ENCODE measurements at regions of chr5 and their contacts with region 1.

Region 1: GRCh38 chr5:75265731-75266130 is 29.1 kb upstream of the ANKRD31 start:
- DNase-seq: peak in 2 of 9 experiments; percentile 57 to 67
- ATAC-seq: peak; percentile 78
- H3K4me3 ChIP-seq: no peak overlapping the region
- H3K4me3 Mint-ChIP-seq: no peak overlapping the region
- H3K27ac ChIP-seq: no peak overlapping the region
- H3K27ac Mint-ChIP-seq: no peak overlapping the region
- H3K4me1 ChIP-seq: no peaks in the 10 kb centered on the region
- H3K4me1 Mint-ChIP-seq: peaks cover 3% of the 10 kb centered on the region
- H3K27me3 ChIP-seq: no peaks in the 10 kb centered on the region
- H3K27me3 Mint-ChIP-seq: peaks cover 5% of the 10 kb centered on the region
- CTCF ChIP-seq: peak; percentile 68

Region 2: DNA sequence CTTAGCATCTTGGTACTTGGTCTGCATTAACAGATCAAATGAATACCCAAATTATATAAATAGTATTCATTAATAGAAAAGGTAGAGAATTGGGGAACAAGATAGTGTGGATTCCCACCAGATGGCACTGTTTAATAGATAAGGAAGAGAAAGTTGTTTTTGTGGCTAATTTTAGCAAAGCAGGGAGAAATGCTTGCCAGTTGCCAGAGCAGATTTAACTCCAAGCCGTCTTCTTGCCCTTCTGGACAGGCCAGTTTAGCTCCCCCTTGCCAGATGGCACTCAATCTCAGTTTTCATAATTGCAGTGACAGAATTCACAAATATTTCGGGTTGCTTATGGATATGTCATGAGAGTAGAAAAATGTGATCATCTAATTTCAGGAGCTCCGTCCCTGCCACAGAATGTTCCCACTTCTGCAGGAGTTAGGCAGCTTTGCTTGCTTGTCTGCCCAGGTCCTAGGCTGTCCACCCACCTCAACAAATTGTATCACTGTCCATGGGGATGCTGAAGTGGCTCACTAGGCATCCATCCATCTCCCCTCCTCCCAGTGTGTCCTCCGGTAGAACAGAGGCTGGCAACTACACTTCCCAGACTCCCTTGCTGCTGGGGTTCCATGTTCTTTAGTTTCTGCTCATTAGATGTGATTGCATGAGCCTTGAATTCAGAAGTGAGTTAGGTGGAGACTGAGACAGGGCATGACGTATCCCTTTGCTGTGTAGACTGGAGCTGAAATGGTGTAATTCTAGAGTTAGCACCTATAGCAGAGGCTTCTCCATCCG is 592.5 kb before region 1 on chr5:
- CTCF ChIA-PET with region 1: no interaction called
- POLR2A ChIA-PET with region 1: no interaction called
- intact Hi-C with region 1: loop called in 1 of 2 experiments (anchors 2 kb)
- DNase-seq: peak in 2 of 9 experiments; percentile 32 to 44
- ATAC-seq: no peak
- H3K4me3 ChIP-seq: no peak overlapping the region
- H3K4me3 Mint-ChIP-seq: no peak overlapping the region
- H3K27ac ChIP-seq: no peak overlapping the region
- H3K27ac Mint-ChIP-seq: no peak overlapping the region
- H3K4me1 ChIP-seq: no peaks in the 10 kb centered on the region
- H3K4me1 Mint-ChIP-seq: peaks cover 2% of the 10 kb centered on the region
- H3K27me3 ChIP-seq: peaks cover 0 to 3% of the 10 kb centered on the region in 2 experiments
- H3K27me3 Mint-ChIP-seq: peaks cover 10% of the 10 kb centered on the region
- CTCF ChIP-seq: no peak

Region 3: DNA sequence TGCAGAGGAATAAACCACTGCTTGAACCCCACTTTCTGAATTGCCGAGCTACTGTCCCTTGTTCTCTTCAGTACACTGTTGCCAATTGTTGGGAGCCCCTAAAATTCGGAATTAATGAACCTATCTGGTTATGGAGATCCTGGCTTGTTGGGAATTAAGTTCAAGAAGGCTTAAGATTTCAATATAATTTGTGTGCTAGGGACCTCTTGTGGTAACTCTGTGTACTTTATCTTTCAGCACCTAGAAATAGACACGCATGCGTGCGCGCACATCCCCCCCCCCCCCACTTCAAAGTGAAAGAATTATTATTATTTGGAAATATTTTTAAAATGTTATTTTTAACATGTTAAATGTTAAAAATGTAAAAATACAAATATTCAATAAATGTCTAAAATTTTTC is 346.2 kb before region 1 on chr5:
- CTCF ChIA-PET with region 1: interaction called, 11 read pairs
- POLR2A ChIA-PET with region 1: no interaction called
- intact Hi-C with region 1: loop called in 1 of 2 experiments (anchors 2 kb)
- DNase-seq: peak in 3 of 9 experiments; percentile 18 to 73 (median 62)
- ATAC-seq: peak; percentile 78
- H3K4me3 ChIP-seq: no peak overlapping the region
- H3K4me3 Mint-ChIP-seq: no peak overlapping the region
- H3K27ac ChIP-seq: no peak overlapping the region
- H3K27ac Mint-ChIP-seq: no peak overlapping the region
- H3K4me1 ChIP-seq: no peaks in the 10 kb centered on the region
- H3K4me1 Mint-ChIP-seq: no peaks in the 10 kb centered on the region
- H3K27me3 ChIP-seq: no peaks in the 10 kb centered on the region
- H3K27me3 Mint-ChIP-seq: peaks cover 2% of the 10 kb centered on the region
- CTCF ChIP-seq: peak; percentile 79

Region 4: GRCh38 chr5:74934949-74935751 is 330.6 kb before region 1 on chr5:
- CTCF ChIA-PET with region 1: interaction called, 7 read pairs
- POLR2A ChIA-PET with region 1: no interaction called
- intact Hi-C with region 1: loop called in 1 of 2 experiments (anchors 1 kb)
- DNase-seq: peak in 7 of 9 experiments; percentile 7 to 60 (median 21)
- ATAC-seq: peak; percentile 71
- H3K4me3 ChIP-seq: peak overlapping the region; percentile 5 to 7
- H3K4me3 Mint-ChIP-seq: peak overlapping the region; percentile 73
- H3K27ac ChIP-seq: peak overlapping the region in 1 of 2 experiments; percentile 44
- H3K27ac Mint-ChIP-seq: peak overlapping the region; percentile 83
- H3K4me1 ChIP-seq: peaks cover 19% of the 10 kb centered on the region
- H3K4me1 Mint-ChIP-seq: peaks cover 26% of the 10 kb centered on the region
- H3K27me3 ChIP-seq: peaks cover 0 to 2% of the 10 kb centered on the region in 2 experiments
- H3K27me3 Mint-ChIP-seq: no peaks in the 10 kb centered on the region
- CTCF ChIP-seq: no peak

Region 5: DNA sequence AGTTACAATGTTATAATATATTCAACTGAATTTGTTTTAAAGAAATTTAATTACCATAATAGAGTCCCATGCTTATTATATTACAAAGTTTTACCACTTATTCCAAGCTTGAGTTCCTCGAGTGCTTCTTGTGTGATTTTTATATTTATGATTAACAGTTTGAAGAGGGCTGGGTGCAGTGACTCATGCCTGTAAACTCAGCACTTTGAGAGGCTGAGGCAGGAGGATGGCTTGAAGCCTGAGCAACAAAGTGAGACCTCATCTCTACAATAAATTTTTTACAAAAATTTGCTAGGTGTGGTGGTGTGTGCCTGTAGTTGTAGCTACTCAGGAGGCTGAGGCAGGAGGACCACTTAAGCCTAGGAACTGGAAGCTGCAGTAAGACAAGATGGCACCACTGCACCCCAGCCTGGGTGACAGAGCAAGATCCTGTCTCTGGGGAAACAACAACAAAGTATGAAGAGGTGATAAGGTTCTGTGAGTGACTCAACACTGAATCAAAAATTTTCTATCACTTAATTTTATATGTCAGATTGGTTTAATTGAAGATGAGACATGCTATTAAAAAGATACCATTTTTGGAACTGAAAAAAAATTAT is 442.3 kb after region 1 on chr5:
- CTCF ChIA-PET with region 1: no interaction called
- POLR2A ChIA-PET with region 1: no interaction called
- intact Hi-C with region 1: no loop called
- DNase-seq: no peak
- ATAC-seq: no peak
- H3K4me3 ChIP-seq: no peak overlapping the region
- H3K4me3 Mint-ChIP-seq: no peak overlapping the region
- H3K27ac ChIP-seq: no peak overlapping the region
- H3K27ac Mint-ChIP-seq: no peak overlapping the region
- H3K4me1 ChIP-seq: no peaks in the 10 kb centered on the region
- H3K4me1 Mint-ChIP-seq: peaks cover 11% of the 10 kb centered on the region
- H3K27me3 ChIP-seq: no peaks in the 10 kb centered on the region
- H3K27me3 Mint-ChIP-seq: no peaks in the 10 kb centered on the region
- CTCF ChIP-seq: no peak

Measured in CD8-positive, alpha-beta T cell (primary cell).